ENCODE measurements at regions of chr5 and their contacts with region 1.

Region 1: GRCh38 chr5:6525910-6526309 is 77.3 kb downstream of the UBE2QL1 start:
- DNase-seq: no peak

Region 2: GRCh38 chr5:5492087-5492933 is 1033.6 kb before region 1 on chr5:
- intact Hi-C with region 1: loop called (anchors 10 kb)
- DNase-seq: no peak

Region 3: GRCh38 chr5:6201626-6202025 is 324.3 kb before region 1 on chr5:
- intact Hi-C with region 1: no loop called
- DNase-seq: no peak